Esophagus squamous epithelium (tissue), 5 donors: ENCODE measurements at regions of chrX and their contacts with region 1.

Region 1: GRCh38 chrX:9341291-9342201 is 123.3 kb upstream of the TBL1X start:
- DNase-seq: peak; percentile 23
- H3K4me3 ChIP-seq: peak overlapping the region in 3 of 4 donors; percentile 3 to 39 (median 15)
- H3K27ac ChIP-seq: peak overlapping the region; percentile 58 to 87 (median 80)
- H3K4me1 ChIP-seq: peaks cover 4 to 33% (median 16%) of the 10 kb centered on the region in 3 donors
- H3K27me3 ChIP-seq: no peaks in the 10 kb centered on the region
- CTCF ChIP-seq: no peak
- POLR2A ChIP-seq: no peak

Region 2: GRCh38 chrX:8849945-8850344 is 491.6 kb before region 1 on chrX:
- intact Hi-C with region 1: no loop called
- DNase-seq: no peak
- H3K4me3 ChIP-seq: no peak overlapping the region
- H3K27ac ChIP-seq: no peak overlapping the region
- H3K4me1 ChIP-seq: no peaks in the 10 kb centered on the region
- H3K27me3 ChIP-seq: no peaks in the 10 kb centered on the region
- CTCF ChIP-seq: no peak
- POLR2A ChIP-seq: no peak

Region 3: DNA sequence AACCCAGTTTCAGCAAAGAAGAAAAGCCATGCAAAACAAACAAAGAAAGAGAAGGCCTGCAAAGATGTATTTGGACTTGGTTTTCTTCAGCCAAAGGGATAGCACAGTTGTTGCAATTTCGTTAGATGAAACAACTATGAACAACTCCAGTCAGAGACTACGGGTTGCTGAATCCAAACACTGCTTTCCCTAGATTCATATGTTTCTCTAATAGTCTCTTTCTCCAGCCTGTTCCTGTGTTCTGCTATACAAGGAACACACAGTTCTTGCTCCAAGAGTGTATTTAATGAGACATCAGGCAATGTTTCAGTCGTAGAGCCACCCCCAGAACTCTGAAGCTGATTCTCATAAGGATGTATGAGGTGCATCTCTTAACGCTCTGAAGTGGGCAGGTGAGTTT is 39.2 kb before region 1 on chrX:
- intact Hi-C with region 1: no loop called
- DNase-seq: no peak
- H3K4me3 ChIP-seq: no peak overlapping the region
- H3K27ac ChIP-seq: no peak overlapping the region
- H3K4me1 ChIP-seq: no peaks in the 10 kb centered on the region
- H3K27me3 ChIP-seq: no peaks in the 10 kb centered on the region
- CTCF ChIP-seq: no peak
- POLR2A ChIP-seq: no peak

Region 4: GRCh38 chrX:9464435-9465371 is 123.2 kb after region 1 on chrX and contains the start of gene TBL1X:
- intact Hi-C with region 1: loop called (anchors 5 kb)
- DNase-seq: no peak
- H3K4me3 ChIP-seq: peak within 1 kb of the TSS; percentile 62 to 79 (median 69)
- H3K27ac ChIP-seq: peak within 1 kb of the TSS; percentile 82 to 88 (median 86)
- H3K4me1 ChIP-seq: peaks cover 21 to 57% (median 23%) of the 10 kb centered on the region in 3 donors
- H3K27me3 ChIP-seq: no peaks in the 10 kb centered on the region
- CTCF ChIP-seq: peak in 1 of 6 experiments; percentile 6
- POLR2A ChIP-seq: peak in 1 of 4 donors; percentile 19
- total RNA-seq, gene TBL1X: 17.5 to 24.2 (median 21.8) TPM